ENCODE measurements at regions of chr14 and their contacts with region 1.

Region 1: DNA sequence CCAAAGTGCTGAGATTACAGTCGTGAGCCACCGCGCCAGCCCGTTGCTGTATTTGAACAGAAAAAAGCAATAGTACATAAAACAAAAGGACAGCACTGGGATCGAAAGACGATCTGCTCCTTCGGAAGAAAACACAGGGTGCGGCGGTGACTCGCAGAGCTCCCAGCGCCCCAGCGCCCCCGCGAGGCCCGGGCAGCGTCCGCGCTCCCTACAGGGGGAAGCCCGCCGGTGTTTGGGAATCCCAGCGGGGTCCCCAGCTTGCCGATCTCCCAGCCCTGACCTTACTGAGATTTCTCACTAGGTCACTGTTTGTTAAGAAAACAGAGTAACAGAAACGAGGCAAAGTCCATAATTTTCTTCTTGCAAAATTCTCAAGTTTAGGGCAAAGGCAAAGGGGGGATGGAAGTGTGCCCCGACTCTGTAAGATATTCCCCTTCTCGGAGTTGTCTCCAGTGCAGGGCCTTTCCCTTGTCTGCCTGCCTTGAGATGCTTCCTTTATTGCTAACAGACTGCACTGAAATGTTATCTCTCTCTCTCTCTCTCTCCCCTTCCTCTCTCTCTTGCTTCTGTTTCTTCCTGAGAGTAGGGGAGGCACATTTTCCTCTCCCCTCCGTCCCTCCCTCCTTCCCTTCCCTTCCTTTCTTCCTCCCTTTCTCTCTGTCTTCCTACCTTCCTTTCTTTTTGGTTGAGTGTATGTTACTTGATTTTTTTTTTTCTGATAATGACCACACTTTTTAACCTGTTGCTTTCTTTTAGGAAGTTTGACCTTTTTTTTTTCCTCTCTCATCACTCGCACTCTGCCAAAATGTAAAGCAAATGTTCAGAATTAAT is 91.9 kb downstream of the TMEM30B start:
- DNase-seq: peak; percentile 76 to 89
- ATAC-seq: peak; percentile 78 to 87 (median 84)
- H3K4me3 ChIP-seq: peak overlapping the region; percentile 68
- H3K27ac ChIP-seq: peak overlapping the region; percentile 94
- H3K4me1 ChIP-seq: peaks cover 36% of the 10 kb centered on the region
- H3K27me3 ChIP-seq: no peaks in the 10 kb centered on the region
- CTCF ChIP-seq: peak; percentile 67

Region 2: GRCh38 chr14:61034416-61035120 is 154.6 kb before region 1 on chr14:
- intact Hi-C with region 1: loop called (anchors 5 to 10 kb)
- DNase-seq: no peak
- ATAC-seq: no peak
- H3K4me3 ChIP-seq: no peak overlapping the region
- H3K27ac ChIP-seq: no peak overlapping the region
- H3K4me1 ChIP-seq: peaks cover 11% of the 10 kb centered on the region
- H3K27me3 ChIP-seq: no peaks in the 10 kb centered on the region
- CTCF ChIP-seq: no peak

Region 3: GRCh38 chr14:61147831-61148549 is 41.2 kb before region 1 on chr14:
- intact Hi-C with region 1: loop called (anchors 2 to 5 kb)
- DNase-seq: peak; percentile 79 to 82
- ATAC-seq: peak; percentile 72 to 85 (median 80)
- H3K4me3 ChIP-seq: peak overlapping the region; percentile 23
- H3K27ac ChIP-seq: peak overlapping the region; percentile 98
- H3K4me1 ChIP-seq: peaks cover 30% of the 10 kb centered on the region
- H3K27me3 ChIP-seq: no peaks in the 10 kb centered on the region
- CTCF ChIP-seq: no peak

Region 4: GRCh38 chr14:61218767-61219166 is 29.6 kb after region 1 on chr14:
- intact Hi-C with region 1: loop called in 1 of 2 experiments (anchors 2 kb)
- DNase-seq: peak; percentile 51 to 76
- ATAC-seq: peak in 3 of 4 donors; percentile 24 to 34 (median 27)
- H3K4me3 ChIP-seq: no peak overlapping the region
- H3K27ac ChIP-seq: peak overlapping the region; percentile 38
- H3K4me1 ChIP-seq: peaks cover 21% of the 10 kb centered on the region
- H3K27me3 ChIP-seq: no peaks in the 10 kb centered on the region
- CTCF ChIP-seq: no peak